Common myeloid progenitor, CD34-positive (primary cell): ENCODE measurements at regions of chr11 and their contacts with region 1.

Region 1: GRCh38 chr11:82229341-82229740 is 504.3 kb downstream of the FAM181B start:
- DNase-seq: peak; percentile 11 to 42 (median 30)
- H3K4me3 ChIP-seq: no peak overlapping the region
- H3K27ac ChIP-seq: no peak overlapping the region
- H3K4me1 ChIP-seq: no peaks in the 10 kb centered on the region
- H3K27me3 ChIP-seq: no peaks in the 10 kb centered on the region

Region 2: GRCh38 chr11:81644239-81644840 is 585.0 kb before region 1 on chr11:
- CTCF ChIA-PET with region 1: interaction called, 11 read pairs
- POLR2A ChIA-PET with region 1: no interaction called
- DNase-seq: peak; percentile 36 to 65 (median 63)
- H3K4me3 ChIP-seq: no peak overlapping the region
- H3K27ac ChIP-seq: no peak overlapping the region
- H3K4me1 ChIP-seq: no peaks in the 10 kb centered on the region
- H3K27me3 ChIP-seq: peaks cover 3 to 32% (median 6%) of the 10 kb centered on the region in 5 experiments